IMR-90 (cell line): ENCODE measurements at regions of chr4 and their contacts with region 1.

Region 1: DNA sequence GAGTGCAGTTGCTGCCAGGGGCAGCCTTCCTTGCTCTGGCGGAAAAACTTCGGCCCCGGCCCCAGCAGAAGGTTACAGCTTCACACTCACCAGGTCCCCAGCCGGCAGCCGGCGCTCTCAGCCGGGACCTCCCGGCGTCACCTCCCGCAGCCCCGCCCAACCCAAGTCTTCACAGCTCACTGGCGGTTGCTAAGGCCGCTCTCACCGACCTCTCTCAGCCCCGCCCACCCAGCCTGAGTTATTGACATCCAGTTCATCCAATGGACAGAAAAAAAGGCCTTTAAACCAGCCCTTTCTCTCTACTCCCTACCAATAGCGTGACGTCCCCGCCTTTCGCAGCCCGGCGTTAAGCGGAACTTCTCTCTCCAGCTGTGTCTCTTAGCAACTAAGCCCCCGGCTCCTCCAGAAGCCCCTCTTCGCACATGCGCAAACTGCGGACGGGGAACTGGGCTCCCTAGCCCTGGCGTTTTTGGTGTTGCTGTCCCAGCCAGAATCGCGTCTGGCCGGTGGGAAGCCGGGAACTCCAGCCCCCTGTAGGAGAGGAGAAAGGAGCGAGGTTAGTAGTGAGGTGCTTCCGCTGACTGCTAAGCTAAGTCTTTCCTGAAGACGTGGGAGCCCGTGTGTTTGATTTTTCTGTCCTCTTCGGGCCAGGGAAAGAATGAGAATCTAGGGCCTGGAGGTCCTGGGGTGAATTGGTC is at the start of gene BBS12:
- DNase-seq: peak; percentile 99
- ATAC-seq: peak; percentile 99
- H3K4me3 ChIP-seq: peak within 1 kb of the TSS; percentile 55
- H3K27ac ChIP-seq: peak within 1 kb of the TSS; percentile 36
- H3K4me1 ChIP-seq: peaks cover 2% of the 10 kb centered on the region
- H3K27me3 ChIP-seq: no peaks in the 10 kb centered on the region
- CTCF ChIP-seq: peak; percentile 52
- POLR2A ChIP-seq: peak; percentile 53; the same call in 1 of the 2 replicates
- RAD21 ChIP-seq: peak; percentile 53
- total RNA-seq, gene BBS12: 5.0 and 5.9 TPM in 2 replicates

Region 2: DNA sequence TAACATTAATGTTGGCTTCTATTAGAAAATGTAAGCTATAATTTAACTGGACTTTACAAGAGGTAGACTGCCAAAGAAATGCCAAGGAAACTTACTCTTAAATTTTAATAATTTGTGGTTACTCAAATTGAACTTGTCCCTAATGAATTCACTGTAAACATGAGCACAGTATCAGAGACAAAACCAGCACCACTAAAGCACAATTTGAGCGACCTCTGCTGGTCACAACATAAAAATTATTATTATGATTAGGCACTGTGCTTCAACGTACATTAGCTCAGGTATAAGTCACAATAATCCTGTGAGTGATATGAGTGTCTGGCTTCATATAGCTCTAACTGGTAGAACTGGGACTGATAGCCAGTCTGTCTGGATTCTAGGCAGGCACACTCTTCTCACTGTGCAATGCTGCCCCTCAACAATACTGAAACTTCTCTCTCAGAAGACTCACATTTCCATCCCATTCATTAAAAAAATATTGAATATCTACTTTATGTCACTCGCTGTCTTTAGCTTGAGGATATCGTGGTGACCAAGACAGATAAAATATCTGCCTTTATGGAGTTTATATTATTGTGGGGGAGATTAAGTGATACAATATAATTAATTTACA is 181.9 kb after region 1 on chr4:
- CTCF ChIA-PET with region 1: interaction called, 6 read pairs
- POLR2A ChIA-PET with region 1: no interaction called
- dilution Hi-C with region 1: no loop called
- in situ Hi-C with region 1: no loop called
- intact Hi-C with region 1: loop called (anchors 1 kb)
- DNase-seq: peak; percentile 68
- ATAC-seq: peak; percentile 89
- H3K4me3 ChIP-seq: no peak overlapping the region; the same call in 1 of the 2 replicates
- H3K27ac ChIP-seq: no peak overlapping the region
- H3K4me1 ChIP-seq: peaks cover 9% of the 10 kb centered on the region
- H3K27me3 ChIP-seq: no peaks in the 10 kb centered on the region
- CTCF ChIP-seq: peak; percentile 75
- POLR2A ChIP-seq: no peak
- RAD21 ChIP-seq: peak; percentile 84